ENCODE measurements at regions of chr5 and their contacts with region 1.

Region 1: DNA sequence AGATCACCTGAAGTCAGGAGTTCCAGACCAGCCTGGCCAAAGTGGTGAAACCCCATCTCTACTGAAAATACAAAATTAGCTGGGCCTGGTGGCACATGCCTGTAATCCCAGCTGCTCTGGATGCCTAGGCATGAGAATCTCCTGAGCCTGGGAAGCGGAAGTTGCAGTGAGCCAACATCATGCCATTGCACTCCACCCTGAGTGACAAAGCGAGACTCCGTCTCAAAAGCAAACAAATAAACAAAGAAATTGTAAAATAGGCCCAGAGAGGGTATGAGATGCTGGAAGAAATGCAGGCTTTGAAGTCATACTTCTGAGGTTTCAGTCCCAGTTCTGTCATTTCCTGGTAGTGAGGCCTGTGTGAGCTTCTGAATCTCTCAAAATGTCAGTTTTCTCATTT is 5.3 kb upstream of the ARHGEF37 start:
- DNase-seq: peak; percentile 66
- H3K4me3 Mint-ChIP-seq: no peak overlapping the region
- H3K27ac Mint-ChIP-seq: peak overlapping the region; percentile 89
- H3K4me1 Mint-ChIP-seq: peaks cover 34% of the 10 kb centered on the region
- H3K27me3 Mint-ChIP-seq: no peaks in the 10 kb centered on the region

Region 2: DNA sequence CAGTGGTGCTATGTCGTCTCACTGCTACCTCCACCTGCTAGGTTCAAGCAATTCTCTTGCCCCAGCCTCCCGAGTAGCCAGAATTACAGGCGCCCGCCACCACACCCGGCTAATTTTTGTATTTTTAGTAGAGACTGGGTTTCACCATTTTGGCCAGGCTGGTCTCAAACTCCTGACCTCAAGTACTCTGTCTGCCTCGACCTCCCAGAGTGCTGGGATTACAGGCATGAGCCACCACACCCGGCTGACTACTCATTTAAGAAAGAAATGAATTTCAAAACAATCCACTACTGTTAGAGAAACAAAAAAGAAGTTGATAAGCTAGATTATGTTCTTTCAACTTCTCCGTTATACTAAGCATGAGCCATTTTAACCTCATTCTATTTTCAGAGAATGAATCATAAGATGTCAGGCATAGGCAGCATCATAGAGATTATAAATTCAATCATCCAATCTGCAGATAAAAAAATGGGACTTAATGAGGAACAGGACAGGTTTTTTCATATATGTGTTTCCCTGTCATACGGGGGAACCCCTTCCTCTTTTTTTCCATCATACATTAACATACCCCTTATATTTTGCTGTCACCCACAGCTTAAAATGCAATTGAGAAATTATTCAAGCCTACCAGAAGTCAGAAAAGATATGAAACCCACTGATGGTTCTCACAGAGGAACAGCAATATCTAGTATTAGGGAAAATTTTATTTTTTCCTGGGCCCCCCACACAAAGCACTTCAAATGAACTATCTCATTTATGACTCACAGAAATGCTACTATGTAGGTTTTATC is 776.1 kb before region 1 on chr5:
- CTCF ChIA-PET with region 1: no interaction called
- intact Hi-C with region 1: loop called (anchors 5 kb)
- DNase-seq: peak; percentile 51
- H3K4me3 Mint-ChIP-seq: no peak overlapping the region
- H3K27ac Mint-ChIP-seq: peak overlapping the region; percentile 5
- H3K4me1 Mint-ChIP-seq: peaks cover 38% of the 10 kb centered on the region
- H3K27me3 Mint-ChIP-seq: peaks cover 19% of the 10 kb centered on the region

Region 3: DNA sequence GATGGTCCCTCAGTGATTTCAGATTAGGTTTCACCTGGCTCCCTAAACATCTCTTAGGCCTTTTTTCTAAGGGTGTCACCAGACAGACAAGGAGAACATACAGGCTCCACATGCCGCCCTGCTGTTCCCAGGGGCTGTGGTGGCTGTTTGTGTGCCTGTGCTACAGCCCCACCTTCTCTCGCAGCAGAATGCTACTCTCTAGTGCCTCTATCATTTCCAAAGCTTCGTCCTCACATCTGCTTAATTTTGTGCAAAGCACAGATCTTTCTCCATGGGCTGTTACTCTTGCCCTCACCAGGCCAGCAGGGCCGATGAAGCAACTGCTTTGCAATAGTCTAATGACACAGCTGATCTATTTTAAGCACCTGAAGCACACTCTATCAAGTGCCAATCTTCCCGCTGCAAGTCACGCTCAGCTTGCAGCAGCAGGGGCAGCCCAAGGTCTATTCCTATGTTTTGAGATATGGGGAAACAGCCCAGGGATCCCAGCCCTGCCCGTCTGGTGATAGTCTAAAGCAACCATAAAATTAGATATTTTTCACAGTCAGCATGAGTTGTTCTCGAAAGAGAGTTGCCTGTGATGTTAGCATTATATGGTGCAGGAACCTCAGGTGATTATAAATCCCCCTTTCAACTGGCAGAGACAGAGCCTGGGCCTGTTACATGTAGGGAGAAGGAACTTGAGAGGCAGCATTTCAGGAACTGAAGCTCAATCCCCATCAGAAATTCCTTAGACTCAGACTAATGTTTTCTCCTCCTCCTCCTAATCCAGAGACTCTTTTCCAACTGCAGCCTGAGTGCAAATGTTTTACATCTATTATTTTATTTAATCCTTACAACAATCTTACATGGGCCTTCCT is 422.0 kb before region 1 on chr5:
- CTCF ChIA-PET with region 1: no interaction called
- intact Hi-C with region 1: no loop called
- DNase-seq: no peak
- H3K4me3 Mint-ChIP-seq: no peak overlapping the region
- H3K27ac Mint-ChIP-seq: no peak overlapping the region
- H3K4me1 Mint-ChIP-seq: peaks cover 4% of the 10 kb centered on the region
- H3K27me3 Mint-ChIP-seq: peaks cover 2% of the 10 kb centered on the region

Region 4: GRCh38 chr5:149586791-149587283 is 10.8 kb after region 1 on chr5:
- CTCF ChIA-PET with region 1: interaction called, 4 read pairs
- intact Hi-C with region 1: loop called (anchors 1 kb)
- DNase-seq: no peak
- H3K4me3 Mint-ChIP-seq: no peak overlapping the region
- H3K27ac Mint-ChIP-seq: no peak overlapping the region
- H3K4me1 Mint-ChIP-seq: peaks cover 17% of the 10 kb centered on the region
- H3K27me3 Mint-ChIP-seq: no peaks in the 10 kb centered on the region

Region 5: GRCh38 chr5:150092159-150092787 is 516.3 kb after region 1 on chr5:
- CTCF ChIA-PET with region 1: no interaction called
- intact Hi-C with region 1: loop called (anchors 1 kb)
- DNase-seq: no peak
- H3K4me3 Mint-ChIP-seq: no peak overlapping the region
- H3K27ac Mint-ChIP-seq: peak overlapping the region; percentile 79
- H3K4me1 Mint-ChIP-seq: peaks cover 15% of the 10 kb centered on the region
- H3K27me3 Mint-ChIP-seq: peaks cover 16% of the 10 kb centered on the region